ENCODE measurements at regions of chr1 and their contacts with region 1.

Region 1: GRCh38 chr1:201042779-201043461 is 19.4 kb upstream of the KIF21B start:
- DNase-seq: peak; percentile 35
- ATAC-seq: peak; percentile 89
- H3K4me3 ChIP-seq: no peak overlapping the region
- H3K27ac ChIP-seq: no peak overlapping the region
- H3K4me1 ChIP-seq: no peaks in the 10 kb centered on the region
- H3K27me3 ChIP-seq: no peaks in the 10 kb centered on the region
- CTCF ChIP-seq: peak; percentile 90

Region 2: GRCh38 chr1:200971955-200972711 is 70.8 kb before region 1 on chr1:
- CTCF ChIA-PET with region 1: interaction called, 6 read pairs
- POLR2A ChIA-PET with region 1: no interaction called
- in situ Hi-C with region 1: no loop called
- intact Hi-C with region 1: loop called (anchors 2 kb)
- DNase-seq: no peak
- ATAC-seq: no peak
- H3K4me3 ChIP-seq: no peak overlapping the region
- H3K27ac ChIP-seq: no peak overlapping the region
- H3K4me1 ChIP-seq: no peaks in the 10 kb centered on the region
- H3K27me3 ChIP-seq: no peaks in the 10 kb centered on the region
- CTCF ChIP-seq: peak; percentile 93

Region 3: DNA sequence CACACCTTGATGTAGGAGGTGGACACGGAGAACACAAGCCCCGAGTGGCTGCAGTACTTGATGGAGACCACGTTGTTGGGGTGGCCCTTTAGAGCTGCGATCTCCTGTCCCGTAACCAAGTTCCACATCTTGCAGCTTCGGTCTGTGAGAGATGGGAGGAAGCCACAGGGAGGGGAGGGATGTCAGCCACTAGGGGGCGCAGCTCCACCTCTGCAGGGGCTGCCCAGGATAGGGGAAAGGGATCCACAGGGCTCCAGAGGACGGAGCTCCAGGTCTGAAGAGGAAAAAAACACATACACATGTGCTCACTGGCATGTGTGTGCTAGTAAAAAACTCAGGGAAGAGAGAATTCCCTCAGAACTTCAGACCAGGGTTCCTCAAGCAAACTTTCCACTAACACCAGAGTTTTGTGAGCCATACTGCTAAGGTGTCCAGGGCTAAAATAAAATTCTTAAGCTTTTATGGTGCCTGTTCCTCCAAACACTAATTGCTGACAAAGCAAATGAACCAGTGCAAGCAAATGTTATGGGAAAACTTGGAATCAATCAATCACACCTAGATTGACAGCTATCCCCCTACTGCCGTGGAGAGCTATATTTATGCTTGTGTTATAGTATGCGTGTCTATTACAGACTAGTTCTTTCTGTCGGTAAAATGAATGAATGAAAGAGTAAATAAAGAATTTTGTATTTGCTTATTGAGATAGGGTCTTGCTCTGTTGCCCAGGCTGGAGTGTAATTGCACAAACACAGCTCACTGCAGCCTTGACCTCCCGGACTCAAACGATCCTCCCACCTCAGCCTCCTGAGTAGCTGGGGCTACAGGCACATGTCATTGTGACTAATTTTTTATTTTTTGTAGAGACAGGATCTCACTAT is 63.1 kb before region 1 on chr1:
- CTCF ChIA-PET with region 1: interaction called, 8 read pairs
- POLR2A ChIA-PET with region 1: no interaction called
- in situ Hi-C with region 1: no loop called
- intact Hi-C with region 1: loop called (anchors 2 kb)
- DNase-seq: no peak
- ATAC-seq: peak; percentile 94
- H3K4me3 ChIP-seq: no peak overlapping the region
- H3K27ac ChIP-seq: no peak overlapping the region
- H3K4me1 ChIP-seq: no peaks in the 10 kb centered on the region
- H3K27me3 ChIP-seq: no peaks in the 10 kb centered on the region
- CTCF ChIP-seq: peak; percentile 89